Dorsolateral prefrontal cortex (tissue), 120 donors: ENCODE measurements at regions of chr1 and their contacts with region 1.

Region 1: GRCh38 chr1:1890506-1891348 is at the start of gene GNB1:
- DNase-seq: peak; percentile 62 to 93 (median 80)
- H3K4me3 ChIP-seq: peak within 1 kb of the TSS; percentile 50 to 97 (median 88)
- H3K27ac ChIP-seq: peak within 1 kb of the TSS; percentile 32 to 97 (median 90)
- H3K27me3 ChIP-seq: peaks cover 0 to 6% (median 0%) of the 10 kb centered on the region in 45 donors
- CTCF ChIP-seq: peak in 4 of 56 donors; percentile 1 to 13 (median 4)
- total RNA-seq, gene GNB1: 375 to 847 (median 628) TPM

Region 2: GRCh38 chr1:1777950-1778662 is 112.6 kb before region 1 on chr1 and contains the start of gene NADK:
- intact Hi-C with region 1: loop called in 1 of 2 experiments (anchors 2 kb)
- DNase-seq: peak in 4 of 10 donors; percentile 38 to 86 (median 53)
- H3K4me3 ChIP-seq: peak within 1 kb of the TSS; percentile 50 to 97 (median 90)
- H3K27ac ChIP-seq: peak within 1 kb of the TSS in 55 of 59 donors; percentile 38 to 92 (median 75)
- H3K27me3 ChIP-seq: no peaks in the 10 kb centered on the region
- CTCF ChIP-seq: peak in 6 of 56 donors; percentile 8 to 27 (median 18)
- total RNA-seq, gene NADK: 37.6 to 88.4 (median 49.0) TPM

Region 3: DNA sequence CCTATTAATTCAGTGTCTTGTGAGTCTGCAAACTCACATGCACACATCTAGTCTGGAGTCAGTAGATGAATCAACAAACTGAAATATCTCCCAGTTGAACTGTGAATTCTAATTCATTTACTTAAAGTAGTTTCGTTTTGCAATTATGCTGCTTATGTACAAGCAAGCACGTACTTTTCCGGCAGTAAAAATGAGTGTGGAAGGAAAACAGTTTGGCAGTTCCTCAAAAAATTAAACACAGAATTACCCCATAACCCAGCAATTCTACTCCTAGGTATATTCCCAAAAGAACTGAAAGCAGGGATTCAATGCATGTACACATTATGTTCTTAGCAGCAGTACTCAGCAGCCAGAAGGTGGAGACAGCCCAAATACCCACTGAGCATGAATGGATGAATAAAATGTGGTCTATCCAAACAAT is 49.1 kb before region 1 on chr1:
- intact Hi-C with region 1: loop called in 1 of 2 experiments (anchors 5 kb)
- DNase-seq: no peak
- H3K4me3 ChIP-seq: peak overlapping the region in 30 of 59 donors; percentile 1 to 43 (median 16)
- H3K27ac ChIP-seq: peak overlapping the region in 58 of 59 donors; percentile 12 to 92 (median 81)
- H3K27me3 ChIP-seq: no peaks in the 10 kb centered on the region
- CTCF ChIP-seq: peak in 14 of 56 donors; percentile 11 to 30 (median 18)

Region 4: DNA sequence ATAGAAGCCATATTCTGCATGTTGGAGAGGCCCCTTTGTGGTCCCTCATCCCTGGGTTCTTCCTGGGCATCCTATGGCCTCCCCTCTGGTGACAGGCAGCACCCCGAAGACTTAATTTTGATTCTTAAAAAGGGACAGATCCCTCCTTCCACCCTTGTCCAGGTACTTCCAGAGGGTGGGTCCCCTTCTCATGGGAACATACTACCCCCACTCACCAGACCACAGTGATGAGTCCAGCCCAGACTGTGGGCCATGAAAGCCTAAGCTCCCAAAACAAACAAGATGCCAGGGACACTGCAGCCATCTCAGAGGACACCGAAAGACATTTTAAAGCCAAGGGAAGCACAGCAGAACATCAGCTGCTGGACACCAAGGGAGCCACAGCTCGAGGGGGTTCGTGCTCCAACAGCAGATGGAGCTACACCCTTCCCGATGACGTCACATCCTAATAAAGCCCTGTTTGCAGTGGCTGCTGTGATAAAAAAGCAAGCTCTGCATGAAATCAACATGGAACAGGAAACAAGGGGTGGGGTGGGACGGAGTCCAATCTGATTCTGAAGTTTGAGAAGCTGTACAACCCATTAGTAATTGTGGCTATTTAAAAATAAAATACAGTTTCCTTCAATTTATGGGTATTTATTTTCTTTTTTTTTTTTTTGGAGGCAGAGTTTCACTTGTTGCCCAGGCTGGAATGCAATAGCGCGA is 32.2 kb before region 1 on chr1:
- intact Hi-C with region 1: loop called in 1 of 2 experiments (anchors 5 kb)
- DNase-seq: peak; percentile 30 to 62 (median 52)
- H3K4me3 ChIP-seq: peak overlapping the region in 38 of 59 donors; percentile 0 to 43 (median 21)
- H3K27ac ChIP-seq: peak overlapping the region in 58 of 59 donors; percentile 46 to 93 (median 83)
- H3K27me3 ChIP-seq: no peaks in the 10 kb centered on the region
- CTCF ChIP-seq: peak in 52 of 56 donors; percentile 15 to 68 (median 48)

Region 5: GRCh38 chr1:1906185-1907097 is 15.7 kb after region 1 on chr1:
- intact Hi-C with region 1: no loop called
- DNase-seq: peak; percentile 73 to 89 (median 84)
- H3K4me3 ChIP-seq: peak overlapping the region in 1 of 59 donors; percentile 19
- H3K27ac ChIP-seq: peak overlapping the region in 48 of 59 donors; percentile 2 to 80 (median 54)
- H3K27me3 ChIP-seq: no peaks in the 10 kb centered on the region
- CTCF ChIP-seq: peak; percentile 51 to 95 (median 88)